Calu3 (cell line): ENCODE measurements at regions of chr22 and their contacts with region 1.

Region 1: DNA sequence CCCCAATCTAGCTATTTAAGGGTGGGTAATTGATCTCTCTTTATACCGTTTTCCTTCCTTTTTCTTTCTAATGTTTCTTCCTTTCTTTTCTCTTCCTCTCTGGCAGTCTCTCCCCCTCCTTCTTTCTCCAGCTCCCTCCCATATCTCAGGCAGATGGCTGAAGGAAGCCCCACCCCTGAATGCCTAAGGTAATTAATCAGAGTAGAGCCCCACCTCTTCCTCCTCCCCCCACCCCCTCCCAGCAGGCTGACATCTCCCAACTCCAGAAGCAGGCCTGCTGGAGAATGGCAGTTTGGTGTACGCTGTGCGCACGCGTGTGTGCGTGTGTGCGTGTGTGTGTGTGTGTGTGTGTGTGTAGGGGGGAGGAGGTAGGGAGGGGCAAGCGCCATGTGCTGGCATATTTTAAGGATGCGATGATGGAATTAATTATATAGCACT is 122.6 kb downstream of the APOL5 start:
- DNase-seq: peak; percentile 84
- H3K4me3 Mint-ChIP-seq: peak overlapping the region; percentile 87
- H3K27ac Mint-ChIP-seq: peak overlapping the region; percentile 74
- H3K4me1 Mint-ChIP-seq: peaks cover 55% of the 10 kb centered on the region
- H3K27me3 Mint-ChIP-seq: no peaks in the 10 kb centered on the region
- CTCF ChIP-seq: no peak

Region 2: DNA sequence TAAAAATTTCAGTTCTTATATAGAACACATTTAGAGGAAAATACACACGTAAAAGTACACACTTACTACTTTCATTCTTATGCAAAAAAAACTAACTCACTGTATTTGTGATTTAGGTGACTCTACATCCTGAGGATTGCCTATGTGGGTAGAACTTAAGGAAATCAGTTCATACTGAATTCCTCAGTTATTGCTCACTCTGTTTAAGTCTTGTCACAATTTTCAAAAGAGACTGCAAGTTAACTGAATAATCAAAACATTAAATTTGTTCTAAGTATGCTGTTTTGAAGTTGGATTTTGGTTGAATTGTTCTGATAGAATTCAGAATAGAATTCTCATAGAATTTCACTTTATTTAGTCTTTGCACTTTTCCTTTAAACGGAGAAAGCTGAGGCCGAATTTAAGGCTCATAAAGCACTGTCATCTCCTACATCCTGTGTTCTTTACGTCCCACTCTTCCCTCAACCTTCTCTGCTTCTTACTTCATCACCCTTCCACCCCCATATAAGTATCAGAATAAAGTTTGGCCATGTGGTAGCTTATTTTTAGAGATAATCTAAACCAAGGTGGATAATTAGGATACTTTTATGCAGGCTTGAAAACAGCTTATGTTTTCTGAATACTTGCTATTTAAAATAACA is 62.9 kb before region 1 on chr22:
- CTCF ChIA-PET with region 1: no interaction called
- intact Hi-C with region 1: loop called (anchors 5 kb)
- DNase-seq: no peak
- H3K4me3 Mint-ChIP-seq: no peak overlapping the region
- H3K27ac Mint-ChIP-seq: peak overlapping the region; percentile 73
- H3K4me1 Mint-ChIP-seq: peaks cover 8% of the 10 kb centered on the region
- H3K27me3 Mint-ChIP-seq: no peaks in the 10 kb centered on the region
- CTCF ChIP-seq: no peak

Region 3: GRCh38 chr22:35792506-35792905 is 47.8 kb before region 1 on chr22:
- CTCF ChIA-PET with region 1: no interaction called
- intact Hi-C with region 1: no loop called
- DNase-seq: peak; percentile 13
- H3K4me3 Mint-ChIP-seq: no peak overlapping the region
- H3K27ac Mint-ChIP-seq: no peak overlapping the region
- H3K4me1 Mint-ChIP-seq: no peaks in the 10 kb centered on the region
- H3K27me3 Mint-ChIP-seq: no peaks in the 10 kb centered on the region
- CTCF ChIP-seq: no peak

Region 4: DNA sequence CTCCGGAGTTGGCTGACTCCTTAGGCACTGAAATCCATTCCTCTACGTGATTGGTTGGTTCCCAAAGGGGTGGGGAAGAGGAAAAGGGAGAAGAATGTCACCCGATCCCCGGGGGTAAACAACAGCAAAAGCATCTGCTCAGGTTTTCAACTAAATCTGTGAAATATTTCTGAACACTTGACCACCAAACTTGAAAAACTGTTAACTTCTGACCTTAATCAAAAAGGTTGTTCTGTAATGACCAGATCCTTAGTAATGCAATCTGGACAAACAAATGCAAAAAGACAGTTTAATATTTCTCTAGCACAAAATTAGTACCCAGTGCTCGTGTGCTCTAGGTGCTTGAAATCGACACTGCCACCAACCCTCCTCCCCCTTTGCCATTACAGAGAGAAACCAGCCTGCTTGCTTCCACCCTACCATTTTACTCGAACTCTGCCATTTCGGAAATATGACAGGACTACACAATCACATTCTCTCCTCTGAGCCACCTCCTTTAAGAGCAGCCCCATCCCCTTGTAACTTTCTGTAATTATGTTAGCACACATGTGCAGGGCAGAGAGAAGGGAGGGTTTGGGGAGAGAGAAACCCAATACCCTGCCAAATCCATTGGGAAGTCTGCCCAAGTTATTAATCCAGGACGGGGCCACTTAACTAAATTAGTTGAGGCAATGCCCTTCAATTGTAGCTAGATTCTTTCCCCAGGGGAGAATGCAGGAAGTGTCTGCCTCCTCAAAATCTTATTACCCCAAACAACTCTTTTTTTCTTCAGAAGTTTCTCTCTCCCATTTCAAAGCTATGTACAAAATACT is 74.5 kb after region 1 on chr22:
- CTCF ChIA-PET with region 1: interaction called, 5 read pairs
- intact Hi-C with region 1: loop called (anchors 2 kb)
- DNase-seq: peak; percentile 78
- H3K4me3 Mint-ChIP-seq: peak overlapping the region; percentile 73
- H3K27ac Mint-ChIP-seq: peak overlapping the region; percentile 76
- H3K4me1 Mint-ChIP-seq: peaks cover 25% of the 10 kb centered on the region
- H3K27me3 Mint-ChIP-seq: no peaks in the 10 kb centered on the region
- CTCF ChIP-seq: no peak

Region 5: DNA sequence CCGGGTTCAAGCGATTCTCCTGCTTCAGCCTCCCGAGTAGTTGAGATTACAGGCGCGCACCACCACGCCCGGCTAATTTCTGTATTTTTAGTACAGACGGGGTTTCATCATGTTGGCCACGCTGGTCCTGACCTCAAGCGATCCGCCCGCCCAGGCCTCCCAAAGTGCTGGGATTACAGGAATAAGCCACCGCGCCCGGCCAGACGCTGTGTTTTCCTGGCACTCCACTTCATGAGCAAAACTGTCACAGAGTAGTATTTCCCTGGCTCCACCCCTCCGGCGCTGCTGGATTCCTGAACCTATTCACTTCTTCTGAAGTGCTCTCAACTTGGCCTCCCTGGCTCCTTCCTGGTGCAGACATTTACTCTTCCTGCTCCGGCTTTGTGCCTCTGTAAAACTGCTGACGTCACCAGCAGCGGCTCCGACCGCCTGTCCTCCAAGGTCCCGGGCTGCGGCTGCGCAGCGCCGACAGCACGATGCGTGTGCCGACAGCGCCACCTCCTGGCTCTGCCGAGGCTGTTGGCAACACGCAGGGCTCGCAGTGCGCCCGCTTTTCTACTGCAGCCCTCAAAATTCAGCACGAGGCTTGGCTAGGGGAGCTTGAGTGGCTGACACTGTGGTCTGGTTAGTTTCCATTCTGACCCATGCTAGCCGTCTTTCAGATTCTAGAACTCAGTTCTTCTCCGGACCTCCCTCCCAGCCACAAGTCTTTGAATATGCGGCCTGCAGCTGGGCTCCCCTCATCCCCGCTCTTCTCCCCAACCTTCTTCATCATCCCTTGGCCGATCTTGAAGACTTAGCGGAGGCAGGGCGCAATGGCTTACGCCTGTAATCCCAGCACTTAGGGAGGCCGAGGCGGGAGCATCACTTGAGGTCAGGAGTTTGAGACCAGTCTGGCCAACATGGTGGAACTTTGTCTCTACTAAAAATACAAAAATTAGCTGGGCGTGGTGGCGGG is 283.6 kb after region 1 on chr22:
- CTCF ChIA-PET with region 1: no interaction called
- intact Hi-C with region 1: loop called (anchors 5 kb)
- DNase-seq: peak; percentile 93
- H3K4me3 Mint-ChIP-seq: peak overlapping the region; percentile 67
- H3K27ac Mint-ChIP-seq: peak overlapping the region; percentile 77
- H3K4me1 Mint-ChIP-seq: no peaks in the 10 kb centered on the region
- H3K27me3 Mint-ChIP-seq: peaks cover 31% of the 10 kb centered on the region
- CTCF ChIP-seq: peak; percentile 97